ENCODE measurements at regions of chr3 and their contacts with region 1.

Region 1: DNA sequence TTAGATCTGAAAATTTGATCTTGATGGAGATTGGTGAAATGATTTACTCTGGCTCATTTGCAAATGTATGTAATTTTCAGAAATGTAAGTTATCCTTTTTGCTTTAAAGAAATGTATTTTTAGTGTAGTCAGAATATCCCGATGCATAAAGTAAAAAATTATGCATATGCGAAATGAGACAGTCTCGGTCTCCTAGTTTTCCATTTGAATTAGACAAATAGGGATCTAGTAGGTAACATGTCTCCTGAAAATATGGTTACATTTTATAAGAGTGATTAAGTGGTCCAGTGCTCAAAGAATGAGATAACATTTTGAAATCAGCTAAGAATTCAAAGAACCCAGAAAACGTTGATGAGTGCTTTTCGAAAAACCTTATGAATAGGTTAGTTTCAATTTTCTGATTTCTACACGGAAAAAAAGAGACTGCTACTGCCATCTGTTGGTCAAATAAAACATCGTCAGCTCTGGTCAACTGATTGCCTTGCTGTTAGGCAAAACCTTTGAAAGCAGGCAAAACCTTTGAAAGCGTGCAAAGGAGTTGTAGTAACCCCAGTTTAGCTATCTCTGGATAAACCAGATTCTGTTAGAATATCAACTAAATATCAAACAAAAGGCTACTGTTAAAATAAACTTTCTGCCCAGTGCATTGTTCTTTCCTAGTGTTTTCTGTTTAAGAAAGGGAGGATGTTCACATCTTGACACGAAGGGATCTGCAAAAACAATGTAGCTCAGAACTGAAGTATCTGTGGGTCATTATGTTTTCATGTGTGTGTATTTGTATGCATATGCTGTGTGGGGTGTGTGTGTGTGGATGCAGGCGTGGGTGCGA is 59.3 kb upstream of the CHMP2B start:
- DNase-seq: peak; percentile 10
- H3K4me3 Mint-ChIP-seq: no peak overlapping the region
- H3K27ac Mint-ChIP-seq: no peak overlapping the region
- H3K4me1 Mint-ChIP-seq: peaks cover 3% of the 10 kb centered on the region
- H3K27me3 Mint-ChIP-seq: peaks cover 4% of the 10 kb centered on the region

Region 2: DNA sequence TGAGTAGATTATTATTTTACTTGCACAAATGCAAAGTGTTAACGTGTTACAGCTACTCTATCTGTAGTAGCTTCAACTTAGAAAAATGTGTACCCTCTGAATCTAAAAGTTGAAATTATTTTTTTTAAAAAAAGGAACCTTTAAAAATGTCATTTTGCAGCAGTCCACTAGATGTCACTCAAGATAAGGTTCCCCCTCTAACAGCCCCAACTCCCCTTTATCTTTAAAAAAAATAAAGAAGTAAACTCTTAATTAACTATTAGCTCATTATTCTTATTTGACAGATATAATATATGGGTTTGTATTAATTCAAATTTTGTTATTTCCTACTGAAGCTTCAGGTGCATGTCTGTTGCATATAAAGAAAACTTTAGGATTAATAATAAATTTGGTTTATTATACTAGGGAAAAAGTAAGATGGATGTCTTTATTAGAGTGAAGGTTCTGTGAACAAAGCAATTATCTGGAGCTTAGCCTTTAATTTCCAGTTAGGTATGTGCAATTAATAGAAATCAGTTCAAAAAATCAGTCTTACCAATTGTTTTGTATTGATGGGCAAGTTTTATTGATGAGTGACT is 465.4 kb before region 1 on chr3:
- CTCF ChIA-PET with region 1: interaction called, 4 read pairs
- POLR2A ChIA-PET with region 1: no interaction called
- intact Hi-C with region 1: loop called (anchors 1 kb)
- DNase-seq: no peak
- H3K4me3 Mint-ChIP-seq: no peak overlapping the region
- H3K27ac Mint-ChIP-seq: no peak overlapping the region
- H3K4me1 Mint-ChIP-seq: no peaks in the 10 kb centered on the region
- H3K27me3 Mint-ChIP-seq: no peaks in the 10 kb centered on the region

Region 3: DNA sequence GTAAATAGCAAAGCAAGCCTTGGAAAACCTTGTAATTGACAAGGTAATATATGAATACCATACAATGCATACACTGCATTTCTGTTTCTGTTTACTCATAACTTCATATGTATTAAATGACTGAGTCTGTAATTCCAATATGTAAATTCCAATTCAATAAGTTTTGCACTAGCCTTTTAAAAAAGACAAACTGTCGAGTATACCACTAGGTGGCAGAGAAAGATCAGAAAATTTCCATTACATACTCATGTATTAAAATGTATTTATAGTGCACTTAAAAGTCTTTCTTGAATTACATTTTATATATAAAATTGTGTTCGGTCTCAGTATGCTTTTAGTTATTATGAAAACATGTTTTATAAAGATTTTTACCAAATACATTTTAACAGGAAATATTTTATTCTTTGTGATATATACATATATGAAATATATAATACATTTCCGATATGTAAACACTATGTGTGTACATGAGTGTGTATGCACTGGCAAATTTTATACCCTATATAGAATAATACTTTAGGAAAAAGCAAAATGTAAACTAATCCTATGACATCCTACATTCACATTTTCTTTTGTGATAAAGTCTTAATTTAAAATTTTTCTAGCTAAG is 393.7 kb before region 1 on chr3:
- CTCF ChIA-PET with region 1: interaction called, 7 read pairs
- POLR2A ChIA-PET with region 1: no interaction called
- intact Hi-C with region 1: loop called (anchors 1 kb)
- DNase-seq: no peak
- H3K4me3 Mint-ChIP-seq: no peak overlapping the region
- H3K27ac Mint-ChIP-seq: no peak overlapping the region
- H3K4me1 Mint-ChIP-seq: no peaks in the 10 kb centered on the region
- H3K27me3 Mint-ChIP-seq: no peaks in the 10 kb centered on the region

Region 4: GRCh38 chr3:86969500-86970189 is 198.2 kb before region 1 on chr3:
- CTCF ChIA-PET with region 1: interaction called, 4 read pairs
- POLR2A ChIA-PET with region 1: no interaction called
- intact Hi-C with region 1: loop called (anchors 1 kb)
- DNase-seq: peak; percentile 28
- H3K4me3 Mint-ChIP-seq: no peak overlapping the region
- H3K27ac Mint-ChIP-seq: no peak overlapping the region
- H3K4me1 Mint-ChIP-seq: no peaks in the 10 kb centered on the region
- H3K27me3 Mint-ChIP-seq: no peaks in the 10 kb centered on the region

Region 5: DNA sequence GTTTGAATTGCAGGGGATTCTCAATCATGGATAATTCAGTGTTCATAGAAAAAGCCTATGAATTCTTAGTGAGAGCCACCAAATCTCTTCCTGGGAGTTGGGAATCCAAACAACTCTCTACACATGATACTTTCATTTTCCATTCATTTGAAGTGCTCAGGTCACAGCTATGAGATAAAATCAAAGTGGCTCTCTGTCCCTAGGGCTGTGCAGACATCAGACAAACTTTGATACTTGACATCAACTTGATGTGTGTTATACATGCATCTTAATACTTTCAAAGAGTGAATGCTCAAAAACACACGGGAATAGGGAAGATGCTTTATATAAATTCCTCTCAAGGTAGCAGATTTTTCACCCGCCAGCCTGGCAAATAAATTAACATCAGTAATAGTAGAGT is 16.1 kb before region 1 on chr3:
- CTCF ChIA-PET with region 1: no interaction called
- POLR2A ChIA-PET with region 1: no interaction called
- intact Hi-C with region 1: no loop called
- DNase-seq: no peak
- H3K4me3 Mint-ChIP-seq: no peak overlapping the region
- H3K27ac Mint-ChIP-seq: no peak overlapping the region
- H3K4me1 Mint-ChIP-seq: no peaks in the 10 kb centered on the region
- H3K27me3 Mint-ChIP-seq: peaks cover 3% of the 10 kb centered on the region

Measured in activated CD4-positive, alpha-beta memory T cell treated with anti-CD3 and anti-CD28 coated beads for 36 hours (primary cell).